WTC11 (cell line): ENCODE measurements at regions of chr2 and their contacts with region 1.

Region 1: GRCh38 chr2:85813982-85814801 is 60.4 kb downstream of the ATOH8 start:
- DNase-seq: peak; percentile 96
- ATAC-seq: peak; percentile 95
- H3K4me3 Mint-ChIP-seq: no peak overlapping the region
- H3K27ac Mint-ChIP-seq: no peak overlapping the region
- H3K4me1 Mint-ChIP-seq: peaks cover 9% of the 10 kb centered on the region
- H3K27me3 Mint-ChIP-seq: peaks cover 3% of the 10 kb centered on the region; the same call in 1 of the 2 replicates
- CTCF ChIP-seq: peak; percentile 95

Region 2: GRCh38 chr2:85468704-85469349 is 345.4 kb before region 1 on chr2:
- CTCF ChIA-PET with region 1: no interaction called
- POLR2A ChIA-PET with region 1: no interaction called
- DNase-seq: no peak
- ATAC-seq: peak; percentile 92
- H3K4me3 Mint-ChIP-seq: no peak overlapping the region
- H3K27ac Mint-ChIP-seq: peak overlapping the region; percentile 31; the same call in 1 of the 2 replicates
- H3K4me1 Mint-ChIP-seq: peaks cover 19% of the 10 kb centered on the region
- H3K27me3 Mint-ChIP-seq: no peaks in the 10 kb centered on the region; the same call in 1 of the 2 replicates
- CTCF ChIP-seq: no peak

Region 3: DNA sequence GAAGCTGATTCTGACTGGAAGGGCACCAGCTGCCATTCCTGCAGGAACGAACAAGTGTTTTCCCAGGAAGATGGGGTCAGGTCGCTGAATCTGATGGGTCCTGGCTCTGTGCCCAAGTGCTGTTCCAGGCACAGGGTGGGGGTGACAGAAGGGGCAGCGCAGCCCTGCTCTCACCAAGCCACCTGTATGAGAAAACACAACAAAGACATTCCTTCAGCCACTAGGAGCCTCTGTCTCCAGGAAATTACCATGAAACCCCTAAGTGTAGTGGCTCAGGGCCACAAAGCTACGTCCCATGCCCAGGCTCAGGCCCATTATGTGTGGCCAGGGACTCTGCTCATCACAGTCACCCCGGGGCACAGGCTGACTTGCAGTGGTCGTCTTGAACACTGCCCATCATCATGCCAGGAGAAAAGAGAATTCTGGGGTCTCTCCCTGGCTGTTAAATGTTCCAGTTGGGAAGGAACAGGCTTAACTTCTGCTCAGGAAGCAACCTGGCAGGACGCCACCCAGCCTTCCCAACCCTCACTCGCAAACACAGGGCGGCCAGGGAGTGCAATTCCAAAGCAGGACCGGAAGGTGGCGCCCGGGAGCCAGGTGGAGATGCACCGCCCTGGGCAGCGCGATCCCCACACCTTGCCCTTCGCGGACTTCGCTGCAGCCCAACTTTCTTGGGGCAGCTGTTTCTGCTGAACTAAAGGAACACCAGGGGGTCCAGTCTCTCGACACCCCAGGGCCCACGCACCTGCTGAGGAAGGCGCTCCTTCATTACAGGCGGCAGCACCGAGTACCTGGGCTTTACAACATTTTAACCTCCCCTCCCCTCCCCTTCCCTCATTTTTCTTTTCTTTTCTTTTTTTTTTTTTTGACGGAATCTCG is 135.2 kb before region 1 on chr2:
- CTCF ChIA-PET with region 1: interaction called, 16 read pairs
- POLR2A ChIA-PET with region 1: no interaction called
- DNase-seq: peak; percentile 92
- ATAC-seq: peak; percentile 96
- H3K4me3 Mint-ChIP-seq: no peak overlapping the region; the same call in 1 of the 2 replicates
- H3K27ac Mint-ChIP-seq: no peak overlapping the region
- H3K4me1 Mint-ChIP-seq: peaks cover 12% of the 10 kb centered on the region
- H3K27me3 Mint-ChIP-seq: peaks cover 5% of the 10 kb centered on the region
- CTCF ChIP-seq: peak; percentile 96

Region 4: GRCh38 chr2:85723707-85724360 is 90.4 kb before region 1 on chr2:
- CTCF ChIA-PET with region 1: interaction called, 100 read pairs
- POLR2A ChIA-PET with region 1: no interaction called
- DNase-seq: no peak
- ATAC-seq: no peak
- H3K4me3 Mint-ChIP-seq: no peak overlapping the region
- H3K27ac Mint-ChIP-seq: no peak overlapping the region
- H3K4me1 Mint-ChIP-seq: no peaks in the 10 kb centered on the region
- H3K27me3 Mint-ChIP-seq: no peaks in the 10 kb centered on the region; the same call in 1 of the 2 replicates
- CTCF ChIP-seq: no peak

Region 5: GRCh38 chr2:85750587-85751575 is 63.3 kb before region 1 on chr2:
- CTCF ChIA-PET with region 1: interaction called, 77 read pairs
- POLR2A ChIA-PET with region 1: no interaction called
- DNase-seq: peak; percentile 83
- ATAC-seq: peak; percentile 48
- H3K4me3 Mint-ChIP-seq: no peak overlapping the region
- H3K27ac Mint-ChIP-seq: no peak overlapping the region
- H3K4me1 Mint-ChIP-seq: peaks cover 10% of the 10 kb centered on the region
- H3K27me3 Mint-ChIP-seq: peaks cover 53% of the 10 kb centered on the region
- CTCF ChIP-seq: peak; percentile 56

Region 6: GRCh38 chr2:85772019-85772745 is 42.0 kb before region 1 on chr2:
- CTCF ChIA-PET with region 1: interaction called, 14 read pairs
- POLR2A ChIA-PET with region 1: no interaction called
- DNase-seq: peak; percentile 59
- ATAC-seq: peak; percentile 51
- H3K4me3 Mint-ChIP-seq: no peak overlapping the region
- H3K27ac Mint-ChIP-seq: no peak overlapping the region
- H3K4me1 Mint-ChIP-seq: peaks cover 47% of the 10 kb centered on the region
- H3K27me3 Mint-ChIP-seq: peaks cover 26% of the 10 kb centered on the region
- CTCF ChIP-seq: no peak